MCF 10A (cell line): ENCODE measurements at regions of chr4 and their contacts with region 1.

Region 1: GRCh38 chr4:156536661-156537060 is 434.9 kb downstream of the PDGFC start:
- DNase-seq: peak; percentile 77
- H3K4me3 Mint-ChIP-seq: no peak overlapping the region
- H3K27ac Mint-ChIP-seq: no peak overlapping the region
- H3K4me1 Mint-ChIP-seq: peaks cover 29% of the 10 kb centered on the region
- H3K27me3 Mint-ChIP-seq: no peaks in the 10 kb centered on the region
- CTCF ChIP-seq: no peak

Region 2: GRCh38 chr4:156547439-156547838 is 10.8 kb after region 1 on chr4:
- CTCF ChIA-PET with region 1: interaction called, 3 read pairs
- POLR2A ChIA-PET with region 1: interaction called, 12 read pairs
- intact Hi-C with region 1: no loop called
- DNase-seq: peak; percentile 67
- H3K4me3 Mint-ChIP-seq: no peak overlapping the region
- H3K27ac Mint-ChIP-seq: peak overlapping the region; percentile 60
- H3K4me1 Mint-ChIP-seq: peaks cover 20% of the 10 kb centered on the region
- H3K27me3 Mint-ChIP-seq: no peaks in the 10 kb centered on the region
- CTCF ChIP-seq: no peak

Region 3: DNA sequence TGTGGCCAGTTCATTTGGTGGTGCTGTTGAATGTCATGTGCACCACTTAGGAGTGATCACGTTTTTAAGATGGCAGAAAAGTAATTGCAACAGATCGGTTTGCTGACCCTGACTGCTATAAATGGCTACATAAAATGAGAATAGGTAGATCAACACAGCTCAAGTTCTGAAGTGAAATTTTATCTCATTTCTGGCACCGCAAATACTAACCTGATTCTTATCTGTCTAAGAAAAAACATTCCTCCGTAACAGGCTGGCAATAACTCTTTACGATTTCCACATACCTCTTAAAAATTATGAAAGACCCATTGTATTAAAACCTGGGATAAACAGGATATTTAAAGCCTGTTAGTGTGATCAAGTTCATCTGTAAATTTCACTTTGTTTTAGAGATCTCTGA is 47.4 kb after region 1 on chr4:
- CTCF ChIA-PET with region 1: no interaction called
- POLR2A ChIA-PET with region 1: interaction called, 10 read pairs
- intact Hi-C with region 1: no loop called
- DNase-seq: peak; percentile 53
- H3K4me3 Mint-ChIP-seq: peak overlapping the region; percentile 35
- H3K27ac Mint-ChIP-seq: peak overlapping the region; percentile 57
- H3K4me1 Mint-ChIP-seq: peaks cover 20% of the 10 kb centered on the region
- H3K27me3 Mint-ChIP-seq: no peaks in the 10 kb centered on the region
- CTCF ChIP-seq: no peak